Activated B cell treated with CpG ODN at 0.5 μM for 24 hours (primary cell): ENCODE measurements at regions of chr11 and their contacts with region 1.

Region 1: GRCh38 chr11:9506489-9507276 is 45.9 kb downstream of the ZNF143 start:
- DNase-seq: peak; percentile 42
- ATAC-seq: peak; percentile 80
- H3K4me3 Mint-ChIP-seq: no peak overlapping the region
- H3K27ac Mint-ChIP-seq: no peak overlapping the region
- H3K4me1 Mint-ChIP-seq: peaks cover 16% of the 10 kb centered on the region
- H3K27me3 Mint-ChIP-seq: no peaks in the 10 kb centered on the region
- CTCF ChIP-seq: peak; percentile 71

Region 2: GRCh38 chr11:9015677-9016076 is 491.0 kb before region 1 on chr11:
- CTCF ChIA-PET with region 1: interaction called, 47 read pairs
- POLR2A ChIA-PET with region 1: interaction called, 3 read pairs
- intact Hi-C with region 1: loop called (anchors 1 kb)
- DNase-seq: no peak
- ATAC-seq: peak; percentile 69
- H3K4me3 Mint-ChIP-seq: no peak overlapping the region
- H3K27ac Mint-ChIP-seq: no peak overlapping the region
- H3K4me1 Mint-ChIP-seq: no peaks in the 10 kb centered on the region
- H3K27me3 Mint-ChIP-seq: peaks cover 7% of the 10 kb centered on the region
- CTCF ChIP-seq: peak; percentile 26

Region 3: GRCh38 chr11:9158898-9159391 is 347.7 kb before region 1 on chr11:
- CTCF ChIA-PET with region 1: interaction called, 45 read pairs
- POLR2A ChIA-PET with region 1: no interaction called
- intact Hi-C with region 1: no loop called
- DNase-seq: no peak
- ATAC-seq: no peak
- H3K4me3 Mint-ChIP-seq: no peak overlapping the region
- H3K27ac Mint-ChIP-seq: no peak overlapping the region
- H3K4me1 Mint-ChIP-seq: peaks cover 6% of the 10 kb centered on the region
- H3K27me3 Mint-ChIP-seq: no peaks in the 10 kb centered on the region
- CTCF ChIP-seq: no peak

Region 4: DNA sequence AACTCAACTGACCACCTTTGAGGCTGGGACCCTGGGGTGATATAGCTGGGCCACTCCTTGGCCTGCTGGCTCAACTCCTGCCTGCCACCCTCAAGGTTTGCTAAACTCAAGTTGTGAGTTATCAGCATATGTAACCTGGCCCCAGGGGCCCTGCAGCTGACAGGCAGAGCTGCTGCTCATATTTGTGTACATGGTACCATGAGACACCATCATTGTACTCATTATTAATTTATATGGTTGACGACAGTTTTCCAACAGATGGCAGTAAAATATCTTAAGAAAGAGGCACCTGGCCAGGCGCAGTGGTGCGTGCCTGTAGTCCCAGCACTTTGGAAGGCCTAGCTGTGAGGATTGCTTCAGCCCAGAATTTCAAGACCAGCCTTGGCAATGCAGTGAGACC is 230.2 kb before region 1 on chr11:
- CTCF ChIA-PET with region 1: interaction called, 3 read pairs
- POLR2A ChIA-PET with region 1: no interaction called
- intact Hi-C with region 1: loop called (anchors 5 kb)
- DNase-seq: no peak
- ATAC-seq: no peak
- H3K4me3 Mint-ChIP-seq: no peak overlapping the region
- H3K27ac Mint-ChIP-seq: no peak overlapping the region
- H3K4me1 Mint-ChIP-seq: peaks cover 9% of the 10 kb centered on the region
- H3K27me3 Mint-ChIP-seq: no peaks in the 10 kb centered on the region
- CTCF ChIP-seq: no peak

Region 5: DNA sequence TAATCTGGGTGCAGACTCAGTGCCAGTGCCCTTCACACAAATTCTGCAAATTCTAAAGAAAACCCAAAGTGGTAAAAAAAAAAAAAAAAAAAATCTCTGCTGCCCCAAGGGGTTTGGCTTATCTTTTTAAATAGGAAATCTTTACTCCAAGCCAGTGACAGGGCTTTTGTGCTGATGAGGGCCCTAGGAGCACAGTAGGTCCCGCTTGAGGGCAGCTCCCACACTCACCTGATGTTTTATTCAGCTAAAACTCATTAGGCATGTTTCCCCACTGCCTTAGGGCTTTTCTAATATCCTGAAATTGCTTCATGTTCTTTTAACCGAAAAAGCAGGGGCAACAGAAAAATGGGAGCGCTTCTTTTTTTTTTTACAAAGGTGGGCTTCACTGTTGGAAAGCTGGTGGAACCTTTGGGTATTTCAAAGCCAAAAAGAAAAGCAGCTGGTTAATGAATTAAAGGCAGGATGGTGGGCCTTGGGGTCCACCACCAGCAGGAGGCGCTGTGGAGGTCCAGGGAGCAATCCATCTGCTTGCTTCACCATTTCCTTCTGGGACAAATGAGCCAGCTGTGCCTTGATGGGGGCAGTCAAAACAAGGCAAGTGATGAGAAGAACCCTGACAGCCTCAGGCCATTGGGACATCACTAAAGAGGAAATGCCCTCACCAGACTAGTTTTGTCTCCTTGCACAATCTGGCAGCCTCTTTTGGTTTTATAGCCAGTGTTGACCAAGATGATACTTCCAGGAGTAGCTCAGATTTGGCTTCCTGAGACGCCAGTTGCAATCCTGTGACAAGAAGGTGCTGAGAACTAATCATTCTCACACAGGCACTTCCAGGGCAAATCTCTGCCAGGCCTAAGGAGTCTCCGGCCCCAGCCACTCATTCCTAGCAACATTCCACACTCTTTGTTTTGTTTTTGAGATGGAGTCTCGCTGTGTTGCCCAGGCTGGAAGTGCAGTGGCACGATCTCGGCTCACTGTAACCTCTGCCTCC is 28.4 kb after region 1 on chr11:
- CTCF ChIA-PET with region 1: interaction called, 13 read pairs
- POLR2A ChIA-PET with region 1: interaction called, 3 read pairs
- intact Hi-C with region 1: no loop called
- DNase-seq: peak; percentile 71
- ATAC-seq: peak; percentile 71
- H3K4me3 Mint-ChIP-seq: no peak overlapping the region
- H3K27ac Mint-ChIP-seq: no peak overlapping the region
- H3K4me1 Mint-ChIP-seq: peaks cover 5% of the 10 kb centered on the region
- H3K27me3 Mint-ChIP-seq: no peaks in the 10 kb centered on the region
- CTCF ChIP-seq: no peak